ENCODE measurements at regions of chr1 and their contacts with region 1.

Region 1: DNA sequence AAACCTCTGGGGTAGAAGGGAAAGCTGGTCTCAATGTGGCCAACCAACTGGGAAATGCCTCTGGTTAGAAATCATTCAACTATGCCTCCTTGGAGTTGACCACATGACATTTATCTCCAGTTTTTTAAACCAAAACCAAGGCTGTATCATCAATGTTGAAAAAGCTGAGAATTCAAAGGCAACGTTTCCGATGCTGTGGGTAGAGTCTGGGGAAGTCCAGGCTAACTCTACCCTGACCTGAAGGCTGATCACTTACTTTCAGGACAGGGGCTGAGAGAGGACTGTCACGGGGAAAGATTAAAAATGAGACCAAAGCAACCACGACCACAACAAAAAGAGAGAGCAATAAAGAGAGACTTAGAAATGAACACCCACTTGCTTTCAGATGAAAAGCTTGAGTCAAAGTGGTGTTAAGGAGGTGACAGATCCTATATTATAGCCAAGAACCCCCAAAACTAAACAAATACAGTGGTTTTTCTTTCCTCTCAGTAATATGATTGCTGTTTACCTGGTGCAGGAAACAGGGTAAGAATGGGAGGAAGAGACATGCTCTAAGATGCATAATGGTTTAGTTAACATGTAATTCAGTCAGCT is 90.8 kb upstream of the TNFSF4 start:
- DNase-seq: no peak
- H3K4me3 ChIP-seq: no peak overlapping the region
- CTCF ChIP-seq: no peak
- POLR2A ChIP-seq: no peak

Region 2: GRCh38 chr1:173269490-173270230 is 28.2 kb before region 1 on chr1:
- intact Hi-C with region 1: loop called (anchors 2 kb)
- DNase-seq: no peak
- H3K4me3 ChIP-seq: no peak overlapping the region
- CTCF ChIP-seq: no peak
- POLR2A ChIP-seq: no peak

Measured in lower leg skin (tissue), 4 donors.